ENCODE measurements at regions of chr2 and their contacts with region 1.

Region 1: GRCh38 chr2:175251425-175252041 is 70.0 kb upstream of the ATP5MC3 start:
- DNase-seq: peak; percentile 28
- CTCF ChIP-seq: peak; percentile 60

Region 2: GRCh38 chr2:175203621-175204496 is 47.7 kb before region 1 on chr2:
- CTCF ChIA-PET with region 1: interaction called, 12 read pairs
- POLR2A ChIA-PET with region 1: no interaction called
- DNase-seq: peak; percentile 17
- CTCF ChIP-seq: peak; percentile 33

Region 3: DNA sequence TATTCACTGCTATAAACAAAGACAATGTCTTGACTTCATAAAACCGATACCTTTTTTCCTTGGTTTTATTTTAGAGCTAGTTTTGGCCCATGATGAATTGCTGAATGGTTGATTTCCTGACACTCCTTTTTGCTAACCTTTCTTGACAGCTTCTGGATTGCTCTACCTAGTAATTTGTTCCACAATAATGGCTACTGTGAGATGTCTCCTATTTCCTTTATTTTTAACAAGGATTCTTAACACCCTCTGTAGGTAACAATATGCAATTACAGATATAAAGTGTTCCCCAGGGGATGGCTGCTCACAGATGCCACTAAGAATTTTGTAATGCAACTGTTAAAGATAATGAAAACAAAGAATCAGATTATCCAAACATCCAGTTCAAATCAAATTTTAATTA is 30.8 kb after region 1 on chr2:
- CTCF ChIA-PET with region 1: interaction called, 10 read pairs
- POLR2A ChIA-PET with region 1: no interaction called
- DNase-seq: peak; percentile 34
- CTCF ChIP-seq: peak; percentile 17

Measured in GM10248 (cell line).